ENCODE measurements at regions of chr7 and their contacts with region 1.

Region 1: GRCh38 chr7:92447345-92448204 is at the start of gene GATAD1:
- DNase-seq: peak; percentile 97
- H3K4me3 ChIP-seq: peak within 1 kb of the TSS; percentile 74 to 97 (median 90)
- H3K27ac ChIP-seq: peak within 1 kb of the TSS; percentile 91 to 95 (median 94)
- H3K4me1 ChIP-seq: peaks cover 0 to 23% (median 15%) of the 10 kb centered on the region in 4 donors
- H3K27me3 ChIP-seq: no peaks in the 10 kb centered on the region
- CTCF ChIP-seq: peak in 1 of 3 experiments; percentile 93
- EP300 ChIP-seq: no peak
- POLR2A ChIP-seq: peak; percentile 41
- total RNA-seq, gene GATAD1: 28.2 to 38.6 (median 35.7) TPM

Region 2: DNA sequence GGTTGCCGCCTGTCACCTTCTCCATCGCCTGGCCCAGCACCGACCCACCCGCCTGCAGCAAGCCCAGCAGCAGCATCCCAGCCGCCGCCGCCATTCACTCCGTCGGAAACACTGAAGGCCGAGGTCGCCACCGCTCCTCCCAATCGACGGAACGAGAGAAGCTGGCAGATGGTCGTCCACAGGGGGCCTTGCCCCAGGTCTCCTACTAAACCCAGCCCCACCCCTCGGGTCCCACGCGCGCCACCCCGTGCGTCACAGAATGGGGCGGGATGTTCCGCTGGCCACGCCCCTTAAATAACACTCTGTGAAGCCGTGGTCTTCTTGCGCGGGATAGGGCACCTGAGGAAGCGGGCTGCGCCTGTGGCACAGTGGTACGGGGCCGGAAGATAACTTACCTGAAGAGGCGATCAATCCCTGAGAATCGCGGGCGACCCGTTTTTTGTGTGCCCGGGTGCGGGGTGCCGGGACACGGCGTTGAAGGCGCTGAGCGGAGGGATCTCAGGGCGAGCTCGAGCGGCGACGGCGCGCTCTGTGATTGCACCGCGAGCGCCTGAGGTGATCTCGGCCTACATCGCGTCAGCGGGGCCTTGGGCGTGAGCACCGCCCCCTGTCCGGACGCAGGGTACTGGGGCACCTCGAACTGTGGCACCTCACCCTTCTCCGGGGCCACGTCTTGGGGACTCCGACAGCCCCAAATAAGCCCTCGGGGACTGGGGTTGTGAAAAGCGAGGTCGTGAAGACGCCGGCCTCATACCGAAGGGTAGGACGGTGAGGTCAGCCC is 313.1 kb before region 1 on chr7 and contains the start of gene CYP51A1:
- intact Hi-C with region 1: loop called (anchors 10 kb)
- DNase-seq: peak; percentile 99
- H3K4me3 ChIP-seq: peak within 1 kb of the TSS; percentile 72 to 100 (median 96)
- H3K27ac ChIP-seq: peak within 1 kb of the TSS; percentile 89 to 98 (median 95)
- H3K4me1 ChIP-seq: peaks cover 5 to 28% (median 25%) of the 10 kb centered on the region in 4 donors
- H3K27me3 ChIP-seq: no peaks in the 10 kb centered on the region
- CTCF ChIP-seq: peak in 1 of 3 experiments; percentile 3
- EP300 ChIP-seq: no peak
- POLR2A ChIP-seq: peak; percentile 75
- total RNA-seq, gene CYP51A1: 21.7 to 32.8 (median 27.3) TPM

Region 3: DNA sequence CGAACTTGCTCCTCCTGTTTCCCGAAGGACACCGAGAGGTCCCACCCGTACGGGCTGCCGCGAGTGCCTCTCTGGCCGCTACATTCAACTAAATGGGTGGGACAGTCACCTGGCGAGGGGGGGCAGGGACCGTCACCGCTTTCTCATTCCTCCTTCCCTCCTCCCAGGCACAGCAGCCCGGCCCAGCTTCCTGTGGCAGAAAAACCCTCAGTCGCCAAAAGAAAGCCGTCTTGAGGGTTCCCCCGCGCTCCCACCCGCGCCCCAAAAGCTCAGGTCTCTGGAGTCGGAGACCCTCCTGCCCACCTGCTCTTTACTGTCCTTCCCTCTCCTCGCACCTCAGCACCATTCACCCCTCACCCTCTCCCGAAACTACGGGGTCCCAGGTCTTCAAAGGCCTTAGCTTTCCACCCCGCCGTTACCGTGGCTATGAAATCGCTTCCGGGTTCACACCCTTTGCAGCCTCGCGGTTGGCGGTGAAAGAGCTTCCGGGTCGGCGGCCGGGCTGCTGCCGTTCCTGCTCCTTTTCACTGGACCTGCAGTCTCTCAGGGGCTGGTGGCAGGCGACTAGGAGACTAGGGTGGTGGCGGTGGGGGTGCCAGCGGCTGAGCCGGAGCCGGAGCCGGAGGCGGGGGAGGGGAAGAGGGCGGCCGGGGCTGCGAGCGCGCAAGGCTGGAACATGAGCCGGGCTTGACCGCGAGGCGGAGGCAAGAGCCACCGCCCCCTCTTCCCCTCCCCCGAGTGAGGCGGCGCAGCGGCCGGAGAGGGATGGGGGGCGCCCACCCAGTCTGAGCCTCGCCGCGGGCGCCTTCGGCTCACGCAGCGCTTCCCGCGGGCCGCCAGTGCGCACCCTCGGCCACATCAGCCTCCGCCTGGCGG is 201.8 kb before region 1 on chr7 and contains the starts of genes ANKIB1 and KRIT1:
- intact Hi-C with region 1: loop called (anchors 2 kb)
- DNase-seq: peak; percentile 98
- H3K4me3 ChIP-seq: peak within 1 kb of the TSS; percentile 78 to 96 (median 94)
- H3K27ac ChIP-seq: peak within 1 kb of the TSS; percentile 91 to 94 (median 93)
- H3K4me1 ChIP-seq: peaks cover 25 to 50% (median 36%) of the 10 kb centered on the region in 4 donors
- H3K27me3 ChIP-seq: no peaks in the 10 kb centered on the region
- CTCF ChIP-seq: peak in 2 of 3 experiments; percentile 28 to 32
- EP300 ChIP-seq: no peak
- POLR2A ChIP-seq: no peak
- total RNA-seq, gene ANKIB1: 25.8 to 37.8 (median 28.6) TPM
- total RNA-seq, gene KRIT1: 48.1 to 57.5 (median 52.4) TPM

Region 4: DNA sequence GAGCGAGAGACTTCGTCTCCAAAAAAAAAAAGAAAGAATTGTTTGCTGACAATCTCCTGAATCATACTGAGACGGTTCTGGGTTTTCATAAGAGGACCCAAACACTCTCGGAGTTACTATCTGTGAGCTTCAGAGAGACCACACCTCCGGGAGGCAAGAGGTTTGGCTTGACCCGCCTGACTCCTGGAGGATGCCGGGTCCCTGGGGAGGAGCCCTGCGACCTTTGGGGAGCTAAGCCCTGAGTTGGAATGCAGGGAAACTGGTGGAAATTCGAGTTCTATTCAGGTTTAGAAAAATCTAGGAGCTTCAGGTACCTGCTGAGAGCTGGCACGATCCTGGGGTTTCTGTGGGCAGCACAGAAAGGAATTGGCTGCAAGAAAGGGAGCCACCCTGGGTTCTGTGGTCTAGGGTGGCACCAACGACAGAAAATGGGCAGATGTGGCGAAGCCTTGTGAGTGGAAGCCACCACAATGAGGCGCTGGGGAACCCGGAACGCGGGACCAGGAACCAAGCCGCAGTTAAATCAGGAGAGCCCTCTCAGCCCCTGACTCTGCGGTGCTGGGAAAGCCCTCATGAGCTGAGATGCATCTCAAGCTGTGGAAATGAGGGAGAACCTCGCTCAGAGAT is 22.1 kb before region 1 on chr7:
- intact Hi-C with region 1: loop called (anchors 2 kb)
- DNase-seq: no peak
- H3K4me3 ChIP-seq: no peak overlapping the region
- H3K27ac ChIP-seq: no peak overlapping the region
- H3K4me1 ChIP-seq: peaks cover 0 to 9% (median 3%) of the 10 kb centered on the region in 4 donors
- H3K27me3 ChIP-seq: peaks cover 0 to 19% (median 3%) of the 10 kb centered on the region in 4 donors
- CTCF ChIP-seq: no peak
- EP300 ChIP-seq: no peak
- POLR2A ChIP-seq: no peak

Measured in esophagus muscularis mucosa (tissue), 4 donors.